Activated CD8-positive, alpha-beta T cell treated with anti-CD3 and anti-CD28 coated beads for 36 hours (primary cell): ENCODE measurements at regions of chr1 and their contacts with region 1.

Region 1: GRCh38 chr1:151098126-151098525 is 27.6 kb downstream of the GABPB2 start:
- DNase-seq: no peak
- ATAC-seq: no peak
- H3K4me3 Mint-ChIP-seq: no peak overlapping the region
- H3K27ac Mint-ChIP-seq: no peak overlapping the region
- H3K4me1 Mint-ChIP-seq: no peaks in the 10 kb centered on the region
- H3K27me3 Mint-ChIP-seq: no peaks in the 10 kb centered on the region
- CTCF ChIP-seq: no peak

Region 2: GRCh38 chr1:150973826-150974579 is 124.1 kb before region 1 on chr1:
- CTCF ChIA-PET with region 1: no interaction called
- POLR2A ChIA-PET with region 1: no interaction called
- intact Hi-C with region 1: no loop called
- DNase-seq: peak; percentile 59
- ATAC-seq: peak; percentile 20
- H3K4me3 Mint-ChIP-seq: peak overlapping the region; percentile 91
- H3K27ac Mint-ChIP-seq: peak overlapping the region; percentile 90
- H3K4me1 Mint-ChIP-seq: peaks cover 60% of the 10 kb centered on the region
- H3K27me3 Mint-ChIP-seq: no peaks in the 10 kb centered on the region
- CTCF ChIP-seq: no peak

Region 3: DNA sequence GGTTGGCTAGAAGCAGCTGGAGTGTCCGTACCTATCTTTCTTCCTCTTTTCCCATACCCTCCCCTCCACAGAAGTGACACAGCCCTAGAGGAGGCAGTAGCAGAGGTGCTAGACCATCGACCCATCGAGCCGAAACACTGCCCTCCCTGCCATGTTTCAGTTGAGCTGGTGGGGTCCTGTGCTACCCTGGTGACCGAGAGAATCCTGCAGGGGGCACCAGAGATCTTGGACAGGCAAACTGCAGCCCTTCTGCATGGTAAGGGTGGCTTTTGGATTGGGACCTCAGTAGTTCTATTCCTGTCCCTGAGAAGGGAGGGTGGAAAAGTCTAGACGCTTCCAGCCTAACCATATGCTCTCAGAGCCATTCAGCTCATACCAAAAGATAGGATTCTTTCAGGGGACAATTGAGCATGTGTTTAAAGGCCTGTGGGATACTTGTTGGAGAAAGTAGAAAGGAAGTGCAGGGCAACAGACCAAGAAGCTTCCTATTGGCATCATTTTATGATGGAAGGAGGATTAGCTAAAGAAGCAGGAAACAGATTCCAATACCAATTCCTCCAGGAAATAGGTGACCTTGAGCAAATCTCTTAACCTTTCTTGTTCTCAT is 73.5 kb before region 1 on chr1:
- CTCF ChIA-PET with region 1: interaction called, 21 read pairs
- POLR2A ChIA-PET with region 1: interaction called, 3 read pairs
- intact Hi-C with region 1: no loop called
- DNase-seq: peak; percentile 94
- ATAC-seq: peak; percentile 99
- H3K4me3 Mint-ChIP-seq: peak overlapping the region; percentile 31
- H3K27ac Mint-ChIP-seq: peak overlapping the region; percentile 3
- H3K4me1 Mint-ChIP-seq: peaks cover 4% of the 10 kb centered on the region
- H3K27me3 Mint-ChIP-seq: no peaks in the 10 kb centered on the region
- CTCF ChIP-seq: peak; percentile 82

Region 4: DNA sequence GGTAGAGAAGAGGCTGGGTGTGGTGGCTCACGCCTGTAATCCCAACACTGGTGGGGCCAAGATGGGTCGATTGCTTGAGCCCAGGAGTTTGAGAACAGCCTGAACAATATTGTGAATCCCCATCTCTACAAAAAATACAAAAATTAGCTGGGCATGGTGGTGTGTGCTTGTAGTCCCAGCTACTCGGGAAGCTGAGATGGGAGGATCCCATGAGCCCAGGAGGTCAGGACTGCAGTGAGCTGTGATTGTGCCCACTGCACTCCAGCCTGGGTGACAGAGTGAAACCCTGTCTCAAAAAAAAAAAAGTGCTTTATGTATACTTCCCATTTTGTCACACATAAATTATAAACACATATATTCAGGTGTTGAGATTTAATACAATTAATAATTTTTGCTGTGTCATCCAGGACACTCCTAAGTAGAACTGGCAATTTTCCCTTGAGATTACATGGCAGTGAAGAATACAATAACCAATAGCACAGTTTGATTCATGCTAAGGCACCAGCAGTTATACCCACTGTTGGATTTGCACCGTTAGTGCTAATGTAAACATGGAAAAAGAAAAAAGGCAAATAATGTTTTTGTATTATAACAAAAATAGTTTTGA is 12.1 kb before region 1 on chr1:
- CTCF ChIA-PET with region 1: interaction called, 29 read pairs
- POLR2A ChIA-PET with region 1: interaction called, 5 read pairs
- intact Hi-C with region 1: no loop called
- DNase-seq: no peak
- ATAC-seq: no peak
- H3K4me3 Mint-ChIP-seq: no peak overlapping the region
- H3K27ac Mint-ChIP-seq: no peak overlapping the region
- H3K4me1 Mint-ChIP-seq: no peaks in the 10 kb centered on the region
- H3K27me3 Mint-ChIP-seq: no peaks in the 10 kb centered on the region
- CTCF ChIP-seq: no peak

Region 5: DNA sequence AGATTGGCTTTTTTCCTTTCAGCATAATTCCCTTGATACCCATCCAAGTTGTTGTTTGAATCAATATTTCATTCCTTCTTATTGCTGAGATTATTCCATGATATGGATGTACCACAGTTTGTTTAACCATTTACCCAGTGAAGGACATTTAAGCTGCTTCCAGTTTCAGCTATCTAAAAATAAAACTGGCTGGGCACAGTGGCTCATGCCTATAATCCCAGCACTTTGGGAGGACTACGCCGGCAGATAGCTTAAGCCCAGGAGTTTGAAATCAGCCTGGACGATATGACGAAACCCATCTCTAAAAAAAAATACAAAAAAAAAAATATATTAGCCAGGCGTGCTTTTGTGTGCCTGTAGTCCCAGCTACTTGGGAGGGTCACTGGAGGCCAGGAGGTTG is 15.8 kb after region 1 on chr1:
- CTCF ChIA-PET with region 1: interaction called, 31 read pairs
- POLR2A ChIA-PET with region 1: no interaction called
- intact Hi-C with region 1: no loop called
- DNase-seq: no peak
- ATAC-seq: no peak
- H3K4me3 Mint-ChIP-seq: no peak overlapping the region
- H3K27ac Mint-ChIP-seq: no peak overlapping the region
- H3K4me1 Mint-ChIP-seq: no peaks in the 10 kb centered on the region
- H3K27me3 Mint-ChIP-seq: no peaks in the 10 kb centered on the region
- CTCF ChIP-seq: no peak

Region 6: GRCh38 chr1:151130987-151131586 is 33.0 kb after region 1 on chr1:
- CTCF ChIA-PET with region 1: interaction called, 23 read pairs
- POLR2A ChIA-PET with region 1: interaction called, 4 read pairs
- intact Hi-C with region 1: no loop called
- DNase-seq: peak; percentile 96
- ATAC-seq: peak; percentile 100
- H3K4me3 Mint-ChIP-seq: peak overlapping the region; percentile 69
- H3K27ac Mint-ChIP-seq: peak overlapping the region; percentile 75
- H3K4me1 Mint-ChIP-seq: peaks cover 12% of the 10 kb centered on the region
- H3K27me3 Mint-ChIP-seq: no peaks in the 10 kb centered on the region
- CTCF ChIP-seq: no peak

Region 7: DNA sequence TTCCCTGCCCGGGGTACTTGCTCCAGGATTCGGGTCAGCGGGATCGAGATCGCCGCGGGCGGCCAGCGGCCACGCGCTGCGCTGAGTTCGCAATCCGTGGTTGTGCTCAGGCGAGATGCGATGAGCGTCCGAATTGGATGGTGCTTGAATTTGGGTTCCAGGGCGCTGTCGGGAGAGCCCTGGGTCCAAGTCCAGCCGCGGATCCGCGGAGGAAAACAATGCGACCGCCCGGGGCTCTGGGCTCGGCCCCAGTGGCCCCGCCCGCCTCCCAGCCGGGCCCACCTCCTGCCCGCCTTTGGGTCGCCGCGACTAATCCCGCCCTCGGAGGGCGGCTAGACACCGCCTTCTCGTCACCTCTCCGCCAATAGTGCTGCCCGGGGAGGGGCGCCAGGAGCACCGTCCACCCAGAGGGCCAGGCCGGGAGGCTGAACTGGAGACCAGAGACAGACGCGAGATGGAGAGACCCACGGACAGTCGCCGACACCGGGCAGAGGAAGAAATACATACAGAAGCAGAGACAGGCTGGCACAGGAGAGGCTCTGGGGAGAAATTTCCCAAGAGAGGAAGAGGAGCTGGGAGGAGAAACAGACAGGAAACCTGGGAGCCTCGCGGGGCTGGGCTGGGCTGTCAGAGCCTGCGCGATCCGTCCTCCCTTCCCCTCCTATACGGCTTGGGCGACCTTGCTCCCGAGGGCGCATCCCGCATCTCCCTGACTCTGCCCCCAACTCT is 48.5 kb after region 1 on chr1 and contains the start of gene SEMA6C:
- CTCF ChIA-PET with region 1: interaction called, 298 read pairs
- POLR2A ChIA-PET with region 1: no interaction called
- intact Hi-C with region 1: no loop called
- DNase-seq: peak; percentile 89
- ATAC-seq: peak; percentile 99
- H3K4me3 Mint-ChIP-seq: peak within 1 kb of the TSS; percentile 70
- H3K27ac Mint-ChIP-seq: peak within 1 kb of the TSS; percentile 41
- H3K4me1 Mint-ChIP-seq: peaks cover 6% of the 10 kb centered on the region
- H3K27me3 Mint-ChIP-seq: peaks cover 3% of the 10 kb centered on the region
- CTCF ChIP-seq: no peak
- total RNA-seq, gene SEMA6C: 3.4 to 3.7 TPM

Region 8: GRCh38 chr1:151254217-151255213 is 156.4 kb after region 1 on chr1 and contains the start of gene PSMD4:
- CTCF ChIA-PET with region 1: interaction called, 18 read pairs
- POLR2A ChIA-PET with region 1: interaction called, 3 read pairs
- intact Hi-C with region 1: no loop called
- DNase-seq: peak; percentile 96
- ATAC-seq: peak; percentile 94
- H3K4me3 Mint-ChIP-seq: peak within 1 kb of the TSS; percentile 83
- H3K27ac Mint-ChIP-seq: peak within 1 kb of the TSS; percentile 88
- H3K4me1 Mint-ChIP-seq: peaks cover 27% of the 10 kb centered on the region
- H3K27me3 Mint-ChIP-seq: no peaks in the 10 kb centered on the region
- CTCF ChIP-seq: no peak
- total RNA-seq, gene PSMD4: 203 to 214 TPM